ENCODE measurements at regions of chr17 and their contacts with region 1.

Region 1: GRCh38 chr17:7004398-7005253 is 7.8 kb upstream of the RNASEK start:
- DNase-seq: no peak
- H3K4me3 ChIP-seq: no peak overlapping the region
- H3K27ac ChIP-seq: peak overlapping the region in 1 of 2 donors; percentile 8
- H3K4me1 ChIP-seq: no peaks in the 10 kb centered on the region
- H3K27me3 ChIP-seq: no peaks in the 10 kb centered on the region
- CTCF ChIP-seq: peak; percentile 64 to 78 (median 71)
- POLR2A ChIP-seq: no peak

Region 2: DNA sequence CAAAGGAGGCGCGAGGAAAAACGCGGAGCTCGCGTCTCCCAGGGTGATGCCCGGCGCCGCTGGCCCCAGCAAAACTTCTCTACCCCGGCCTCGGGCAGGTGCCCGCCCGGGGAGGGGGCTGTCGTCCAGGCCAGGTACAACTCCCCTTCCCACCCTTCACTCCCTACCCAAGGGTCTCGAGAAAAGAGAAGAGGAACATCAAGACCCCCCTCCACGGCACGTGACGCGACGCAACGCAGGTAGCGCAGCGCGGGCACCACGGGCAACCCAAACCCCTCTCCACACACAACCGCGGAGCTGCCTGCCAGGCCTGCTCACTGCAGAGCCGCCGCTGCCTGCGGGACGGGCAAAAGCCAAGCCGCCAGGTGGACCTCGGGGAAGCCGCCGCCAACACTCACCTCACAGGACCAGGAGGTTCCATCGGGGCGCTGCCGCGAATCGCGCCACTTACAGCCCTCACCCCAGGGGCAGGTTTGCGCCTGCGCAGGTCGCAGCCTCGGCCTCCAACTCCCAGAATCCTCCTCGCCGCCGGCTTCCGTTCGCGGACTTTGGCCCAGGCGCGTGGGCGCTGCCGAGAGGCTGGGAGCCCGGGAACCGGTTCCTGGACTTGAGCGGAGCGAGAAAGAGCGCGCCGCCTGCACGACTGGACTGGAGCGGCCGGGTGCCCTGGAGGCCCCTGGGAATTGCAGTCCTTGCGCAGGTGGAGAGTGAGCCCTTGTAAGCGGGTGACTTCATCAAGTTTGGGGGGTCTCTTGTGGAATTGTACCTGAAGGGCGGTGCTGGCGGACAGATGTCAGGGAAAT is 1893.0 kb before region 1 on chr17 and contains the start of gene ZNF232:
- intact Hi-C with region 1: no loop called
- DNase-seq: peak; percentile 93 to 94
- H3K4me3 ChIP-seq: peak within 1 kb of the TSS; percentile 88 to 95 (median 90)
- H3K27ac ChIP-seq: peak within 1 kb of the TSS; percentile 76 to 86
- H3K4me1 ChIP-seq: no peaks in the 10 kb centered on the region
- H3K27me3 ChIP-seq: peaks cover 6 to 20% of the 10 kb centered on the region in 2 donors
- CTCF ChIP-seq: peak in 1 of 3 donors; percentile 9
- POLR2A ChIP-seq: peak; percentile 47
- total RNA-seq, gene ZNF232: 5.1 to 13.8 (median 9.2) TPM

Region 3: DNA sequence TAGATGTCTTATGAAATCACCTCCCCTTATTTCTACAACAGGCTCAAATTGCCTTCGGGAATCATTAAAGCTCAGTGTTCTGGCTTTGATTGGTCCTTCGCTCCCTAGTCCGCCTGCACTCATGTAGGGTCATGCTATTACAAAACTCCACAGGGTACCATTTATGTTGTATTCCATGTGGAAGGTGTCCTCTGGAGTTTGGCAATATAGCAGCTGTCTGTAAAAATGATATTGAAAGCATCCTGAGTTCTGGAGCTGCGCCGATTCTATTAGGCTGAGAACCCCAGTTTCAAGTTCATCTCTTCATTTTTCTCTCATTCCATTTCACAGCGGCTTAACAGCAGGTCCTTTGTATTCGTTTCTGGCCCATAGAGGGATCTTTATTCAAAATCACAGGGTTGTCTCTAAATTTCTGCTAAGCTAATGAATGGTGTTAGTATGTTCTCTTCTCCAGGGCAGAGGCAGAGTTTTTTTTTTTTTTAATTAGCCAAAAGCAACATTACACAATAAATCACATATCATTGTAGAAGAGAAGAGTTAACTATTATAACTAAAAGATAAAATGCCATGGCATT is 101.2 kb before region 1 on chr17:
- intact Hi-C with region 1: no loop called
- DNase-seq: no peak
- H3K4me3 ChIP-seq: peak overlapping the region in 1 of 3 donors; percentile 3
- H3K27ac ChIP-seq: peak overlapping the region; percentile 40 to 43
- H3K4me1 ChIP-seq: no peaks in the 10 kb centered on the region
- H3K27me3 ChIP-seq: no peaks in the 10 kb centered on the region
- CTCF ChIP-seq: no peak
- POLR2A ChIP-seq: no peak

Region 4: GRCh38 chr17:6913608-6914443 is 90.8 kb before region 1 on chr17:
- intact Hi-C with region 1: loop called (anchors 10 kb)
- DNase-seq: peak in 1 of 2 donors; percentile 52
- H3K4me3 ChIP-seq: peak overlapping the region in 2 of 3 donors; percentile 36 to 57
- H3K27ac ChIP-seq: no peak overlapping the region
- H3K4me1 ChIP-seq: no peaks in the 10 kb centered on the region
- H3K27me3 ChIP-seq: no peaks in the 10 kb centered on the region
- CTCF ChIP-seq: peak; percentile 54 to 60 (median 55)
- POLR2A ChIP-seq: no peak

Measured in breast epithelium (tissue), 4 donors.